CD14-positive monocyte (primary cell): ENCODE measurements at regions of chr19 and their contacts with region 1.

Region 1: DNA sequence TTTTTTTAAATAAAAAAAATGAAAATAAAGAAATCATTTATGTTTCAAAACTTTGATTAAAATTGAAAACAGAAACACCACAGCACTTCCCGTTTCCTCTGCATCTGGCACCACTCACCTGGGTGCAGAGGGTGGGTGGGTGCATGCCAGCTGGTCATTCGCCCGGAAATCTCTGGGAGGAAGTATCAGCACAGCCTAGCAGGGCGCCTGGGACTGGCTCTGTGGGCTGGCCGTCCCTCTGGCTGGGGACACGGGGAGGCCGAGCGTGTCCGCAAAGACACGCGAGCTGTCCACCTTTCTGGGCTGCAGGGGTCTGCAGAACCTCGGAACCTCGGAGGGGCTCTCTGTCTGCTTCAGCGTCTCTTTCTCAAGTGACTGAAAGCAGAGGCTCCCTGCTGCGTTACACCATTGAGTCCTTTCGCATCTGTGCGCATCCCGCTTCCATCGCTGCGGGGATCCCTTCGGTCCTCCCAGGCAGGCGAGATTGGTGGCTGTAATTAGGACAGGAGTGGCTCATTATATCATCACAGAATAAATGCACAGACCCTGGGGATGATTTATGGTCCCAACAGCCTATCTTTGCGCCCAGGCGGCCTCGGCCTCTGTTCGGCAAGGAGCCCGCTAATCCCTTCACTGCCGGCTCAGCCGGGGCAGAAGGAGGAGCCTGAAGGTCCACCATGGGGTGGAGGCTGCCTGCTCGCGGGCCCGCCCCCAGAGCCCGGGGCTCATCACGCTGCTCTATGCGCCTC is 17.2 kb downstream of the CRTC1 start:
- DNase-seq: peak; percentile 32 to 55 (median 50)
- H3K4me3 ChIP-seq: peak overlapping the region; percentile 29 to 80 (median 44)
- H3K4me3 Mint-ChIP-seq: peak overlapping the region; percentile 84 to 87
- H3K27ac ChIP-seq: peak overlapping the region; percentile 25 to 41
- H3K27ac Mint-ChIP-seq: peak overlapping the region in 2 of 7 donors; percentile 38 to 63
- H3K4me1 ChIP-seq: peaks cover 26% of the 10 kb centered on the region in 2 donors
- H3K4me1 Mint-ChIP-seq: peaks cover 28% of the 10 kb centered on the region
- H3K27me3 ChIP-seq: no peaks in the 10 kb centered on the region
- H3K27me3 Mint-ChIP-seq: peaks cover 0 to 8% (median 4%) of the 10 kb centered on the region in 3 donors
- CTCF ChIP-seq: no peak

Region 2: DNA sequence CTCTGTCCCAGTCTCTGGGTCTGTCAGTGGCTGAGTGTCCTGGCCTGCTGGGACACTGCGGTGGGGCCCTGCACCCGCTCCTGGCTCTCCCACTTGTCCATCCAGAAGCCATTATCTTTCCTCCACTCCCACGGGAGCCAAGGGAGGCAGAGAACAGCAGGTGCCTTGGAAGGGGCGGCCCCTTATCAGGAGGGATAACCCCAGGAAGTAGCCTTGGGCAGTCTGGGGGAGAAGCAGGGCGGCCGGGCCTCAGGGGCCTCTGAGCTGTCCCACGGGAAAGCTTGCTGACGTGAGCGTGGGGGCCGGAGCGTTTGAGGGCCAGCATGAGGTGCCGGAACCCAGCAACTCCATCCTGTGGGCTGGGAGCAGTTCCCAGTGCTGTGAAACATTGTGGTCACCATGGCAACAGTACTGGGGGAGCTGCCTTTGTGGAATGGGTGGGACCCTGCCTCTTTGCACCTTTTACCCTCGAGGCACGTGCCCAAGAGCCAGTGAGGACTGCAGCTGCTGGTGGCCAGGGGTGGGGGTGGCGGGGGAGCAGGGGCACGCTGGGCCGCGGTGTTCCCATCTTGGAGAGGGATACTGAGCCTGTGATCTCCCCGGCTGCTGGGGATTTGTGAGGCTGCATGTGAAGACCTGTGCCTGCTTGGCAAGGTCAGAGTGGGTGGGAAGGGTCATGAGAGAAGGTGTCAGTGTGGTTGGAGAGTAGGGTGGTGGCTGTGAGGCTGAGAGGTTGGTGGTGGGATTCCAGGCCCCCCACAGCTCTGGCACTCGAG is 42.9 kb before region 1 on chr19:
- intact Hi-C with region 1: loop called in 1 of 2 experiments (anchors 5 kb)
- DNase-seq: no peak
- H3K4me3 ChIP-seq: no peak overlapping the region
- H3K4me3 Mint-ChIP-seq: no peak overlapping the region
- H3K27ac ChIP-seq: no peak overlapping the region
- H3K27ac Mint-ChIP-seq: no peak overlapping the region
- H3K4me1 ChIP-seq: peaks cover 9 to 14% of the 10 kb centered on the region in 2 donors
- H3K4me1 Mint-ChIP-seq: peaks cover 25% of the 10 kb centered on the region
- H3K27me3 ChIP-seq: no peaks in the 10 kb centered on the region
- H3K27me3 Mint-ChIP-seq: peaks cover 8 to 11% (median 9%) of the 10 kb centered on the region in 3 donors
- CTCF ChIP-seq: no peak

Region 3: GRCh38 chr19:18809150-18809868 is 108.6 kb after region 1 on chr19:
- intact Hi-C with region 1: no loop called
- DNase-seq: peak; percentile 42 to 56 (median 53)
- H3K4me3 ChIP-seq: peak overlapping the region; percentile 18 to 66 (median 31)
- H3K4me3 Mint-ChIP-seq: peak overlapping the region; percentile 69 to 87
- H3K27ac ChIP-seq: no peak overlapping the region
- H3K27ac Mint-ChIP-seq: peak overlapping the region in 2 of 7 donors; percentile 7 to 56
- H3K4me1 ChIP-seq: peaks cover 10% of the 10 kb centered on the region in 2 donors
- H3K4me1 Mint-ChIP-seq: peaks cover 12% of the 10 kb centered on the region
- H3K27me3 ChIP-seq: peaks cover 0 to 4% of the 10 kb centered on the region in 2 donors
- H3K27me3 Mint-ChIP-seq: peaks cover 9 to 38% (median 31%) of the 10 kb centered on the region in 3 donors
- CTCF ChIP-seq: no peak

Region 4: GRCh38 chr19:18846862-18847548 is 146.3 kb after region 1 on chr19:
- intact Hi-C with region 1: loop called in 1 of 2 experiments (anchors 10 kb)
- DNase-seq: peak; percentile 59 to 65 (median 64)
- H3K4me3 ChIP-seq: peak overlapping the region in 1 of 3 experiments; percentile 68
- H3K4me3 Mint-ChIP-seq: no peak overlapping the region
- H3K27ac ChIP-seq: peak overlapping the region; percentile 21 to 83
- H3K27ac Mint-ChIP-seq: peak overlapping the region in 6 of 7 donors; percentile 73 to 98 (median 80)
- H3K4me1 ChIP-seq: peaks cover 36 to 51% of the 10 kb centered on the region in 2 donors
- H3K4me1 Mint-ChIP-seq: peaks cover 72% of the 10 kb centered on the region
- H3K27me3 ChIP-seq: no peaks in the 10 kb centered on the region
- H3K27me3 Mint-ChIP-seq: peaks cover 0 to 2% (median 0%) of the 10 kb centered on the region in 3 donors
- CTCF ChIP-seq: peak; percentile 94